Right ventricle myocardium superior (tissue), 1 donor: ENCODE measurements at regions of chr16 and their contacts with region 1.

Region 1: DNA sequence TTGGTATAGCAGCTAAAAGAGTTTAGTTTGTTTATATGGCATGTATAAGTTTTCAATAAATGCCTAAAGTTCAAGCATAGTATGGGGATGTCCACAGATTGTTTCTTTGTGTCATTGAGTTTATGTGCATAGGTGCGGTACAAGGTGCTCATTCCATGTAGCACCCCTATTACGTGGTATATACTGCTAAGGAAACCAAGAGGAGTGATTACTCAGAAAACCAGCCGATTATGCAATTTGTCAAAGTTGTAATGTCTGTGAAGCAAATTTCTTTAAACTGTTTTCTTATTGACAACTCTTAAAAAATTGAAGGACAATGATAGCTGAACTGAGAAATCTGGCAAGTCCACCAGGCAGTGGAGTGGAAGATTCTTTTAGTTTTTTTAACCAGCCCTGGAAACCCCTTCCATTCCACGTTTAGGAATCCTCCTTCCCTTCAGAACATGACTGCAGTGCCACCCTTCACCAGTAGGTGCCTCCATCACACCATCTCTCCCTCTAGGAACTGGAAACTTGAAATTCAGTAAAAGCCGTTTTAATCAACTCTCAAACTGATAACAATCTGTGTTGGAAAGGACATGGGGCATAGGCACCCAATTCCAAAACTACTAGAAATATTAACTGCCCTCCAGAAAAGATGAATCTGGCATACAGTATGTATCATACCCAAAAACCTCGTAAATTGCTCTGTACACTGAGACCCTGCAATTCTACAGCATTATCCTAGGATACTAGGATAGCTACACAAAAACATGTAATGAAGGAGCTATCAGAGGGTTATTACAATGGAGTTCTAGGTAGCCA is 43.5 kb downstream of the REXO5 start:
- DNase-seq: peak; percentile 77
- ATAC-seq: peak; percentile 44

Region 2: GRCh38 chr16:20806168-20807050 is 43.4 kb before region 1 on chr16 and contains the starts of genes ERI2 and REXO5:
- intact Hi-C with region 1: no loop called
- DNase-seq: peak; percentile 95
- ATAC-seq: peak; percentile 97
- total RNA-seq, gene ERI2: 10.0 TPM
- total RNA-seq, gene REXO5: 5.1 TPM

Region 3: GRCh38 chr16:20900299-20901067 is 50.7 kb after region 1 on chr16 and contains the starts of genes DCUN1D3 and LYRM1:
- intact Hi-C with region 1: loop called (anchors 5 kb)
- DNase-seq: peak; percentile 98
- ATAC-seq: peak; percentile 94
- total RNA-seq, gene DCUN1D3: 14.6 TPM
- total RNA-seq, gene LYRM1: 49.8 TPM

Region 4: DNA sequence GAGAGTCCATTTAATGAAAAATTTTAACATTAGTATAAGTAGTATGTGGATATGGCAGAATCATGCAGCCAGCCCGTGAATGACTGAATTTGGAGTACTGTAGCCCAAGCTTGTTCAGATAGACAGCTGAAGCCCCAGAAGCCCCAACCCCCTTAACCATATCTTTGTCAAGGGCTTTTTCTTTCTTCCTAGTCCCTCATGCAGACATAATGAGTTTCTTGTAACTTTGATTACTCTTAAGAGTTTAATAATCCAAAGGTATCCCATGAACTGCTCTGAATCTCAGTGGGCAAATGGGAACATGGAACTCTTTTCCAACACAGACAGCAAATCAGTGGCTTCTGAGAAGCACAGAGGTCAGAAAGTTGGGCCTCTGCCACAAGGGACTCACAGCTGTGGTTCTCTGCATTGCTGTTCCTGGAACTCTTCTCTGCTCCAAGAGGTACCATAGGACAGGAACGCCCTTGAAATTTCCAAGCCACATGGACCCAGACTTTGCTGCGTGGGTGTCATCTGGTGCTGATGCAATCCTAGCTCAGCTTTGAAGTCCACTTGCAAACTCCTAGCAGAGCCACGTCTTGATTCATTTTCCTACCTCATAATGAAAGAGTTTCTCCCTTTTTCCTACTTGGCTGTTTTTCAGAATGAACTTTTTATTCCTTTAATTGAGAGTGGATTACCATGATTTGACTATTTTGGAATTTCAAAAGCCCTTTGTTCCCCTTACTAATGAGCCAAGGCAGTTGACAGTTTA is 68.9 kb after region 1 on chr16:
- intact Hi-C with region 1: loop called (anchors 5 kb)
- DNase-seq: peak; percentile 81
- ATAC-seq: peak; percentile 87

Region 5: GRCh38 chr16:21083729-21084268 is 234.0 kb after region 1 on chr16:
- intact Hi-C with region 1: loop called (anchors 2 kb)
- DNase-seq: peak; percentile 73
- ATAC-seq: peak; percentile 97